Right lobe of liver (tissue), 6 donors: ENCODE measurements at regions of chr3 and their contacts with region 1.

Region 1: GRCh38 chr3:134308350-134308891 is 57.8 kb upstream of the RYK start:
- DNase-seq: peak; percentile 73 to 83 (median 74)
- ATAC-seq: peak; percentile 68 to 76 (median 68)
- H3K4me3 ChIP-seq: no peak overlapping the region
- H3K27ac ChIP-seq: peak overlapping the region in 2 of 3 donors; percentile 13 to 92
- H3K4me1 ChIP-seq: peaks cover 0 to 48% (median 22%) of the 10 kb centered on the region in 4 donors
- H3K27me3 ChIP-seq: no peaks in the 10 kb centered on the region
- CTCF ChIP-seq: peak; percentile 96 to 100 (median 97)
- POLR2A ChIP-seq: no peak

Region 2: GRCh38 chr3:134212906-134213665 is 95.3 kb before region 1 on chr3:
- intact Hi-C with region 1: loop called in 1 of 2 experiments (anchors 10 kb)
- DNase-seq: peak; percentile 73 to 84 (median 76)
- ATAC-seq: peak; percentile 91 to 95 (median 94)
- H3K4me3 ChIP-seq: no peak overlapping the region
- H3K27ac ChIP-seq: no peak overlapping the region
- H3K4me1 ChIP-seq: no peaks in the 10 kb centered on the region
- H3K27me3 ChIP-seq: no peaks in the 10 kb centered on the region
- CTCF ChIP-seq: peak; percentile 88 to 98 (median 96)
- POLR2A ChIP-seq: no peak

Region 3: DNA sequence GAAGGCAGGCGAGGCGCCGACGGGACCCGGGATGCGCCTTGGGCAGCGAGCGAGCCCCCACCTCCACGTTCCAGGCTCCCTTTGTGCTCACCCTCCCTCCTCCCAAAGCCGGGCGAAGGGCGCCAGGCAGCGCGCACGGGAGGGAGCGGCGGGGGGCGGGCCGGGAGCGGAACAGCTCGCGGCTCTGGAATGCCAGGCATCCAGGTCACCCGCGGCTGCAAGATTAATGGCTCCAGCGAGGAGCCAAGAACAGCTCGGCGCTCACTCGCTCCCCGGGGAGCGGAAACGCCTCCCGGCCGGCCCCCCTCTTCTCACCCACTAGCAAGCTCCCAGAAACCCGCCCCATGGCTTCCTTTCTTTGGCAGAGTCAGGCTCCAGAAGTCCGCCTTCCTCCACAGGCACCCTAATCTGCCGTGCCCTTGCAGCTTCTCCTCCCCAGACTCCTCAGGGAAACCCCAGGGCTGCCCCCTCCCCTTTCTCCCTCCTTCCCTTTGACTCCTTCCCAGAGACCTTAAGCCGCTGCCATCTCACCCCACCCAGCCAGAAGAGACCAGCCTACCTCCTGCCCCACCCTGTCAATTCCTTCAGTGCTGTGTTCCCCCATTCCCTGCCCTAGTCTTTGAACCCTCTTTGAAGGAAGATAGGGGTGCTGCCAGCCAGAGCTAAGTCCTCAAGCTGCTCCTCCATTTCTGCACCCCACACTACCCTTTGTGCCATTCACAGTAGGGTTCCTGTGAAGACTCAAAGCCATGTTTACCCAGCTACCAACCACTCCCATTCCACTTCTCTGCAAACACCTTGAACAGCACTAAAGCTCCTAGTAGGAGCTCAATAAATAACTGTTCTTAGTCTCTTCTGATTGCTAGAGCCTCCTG is 55.9 kb after region 1 on chr3:
- intact Hi-C with region 1: loop called in 1 of 2 experiments (anchors 5 kb)
- DNase-seq: peak; percentile 82 to 88 (median 84)
- ATAC-seq: peak; percentile 84 to 91 (median 87)
- H3K4me3 ChIP-seq: no peak overlapping the region
- H3K27ac ChIP-seq: peak overlapping the region; percentile 51 to 59 (median 53)
- H3K4me1 ChIP-seq: peaks cover 0 to 48% (median 20%) of the 10 kb centered on the region in 4 donors
- H3K27me3 ChIP-seq: no peaks in the 10 kb centered on the region
- CTCF ChIP-seq: no peak
- POLR2A ChIP-seq: no peak

Region 4: DNA sequence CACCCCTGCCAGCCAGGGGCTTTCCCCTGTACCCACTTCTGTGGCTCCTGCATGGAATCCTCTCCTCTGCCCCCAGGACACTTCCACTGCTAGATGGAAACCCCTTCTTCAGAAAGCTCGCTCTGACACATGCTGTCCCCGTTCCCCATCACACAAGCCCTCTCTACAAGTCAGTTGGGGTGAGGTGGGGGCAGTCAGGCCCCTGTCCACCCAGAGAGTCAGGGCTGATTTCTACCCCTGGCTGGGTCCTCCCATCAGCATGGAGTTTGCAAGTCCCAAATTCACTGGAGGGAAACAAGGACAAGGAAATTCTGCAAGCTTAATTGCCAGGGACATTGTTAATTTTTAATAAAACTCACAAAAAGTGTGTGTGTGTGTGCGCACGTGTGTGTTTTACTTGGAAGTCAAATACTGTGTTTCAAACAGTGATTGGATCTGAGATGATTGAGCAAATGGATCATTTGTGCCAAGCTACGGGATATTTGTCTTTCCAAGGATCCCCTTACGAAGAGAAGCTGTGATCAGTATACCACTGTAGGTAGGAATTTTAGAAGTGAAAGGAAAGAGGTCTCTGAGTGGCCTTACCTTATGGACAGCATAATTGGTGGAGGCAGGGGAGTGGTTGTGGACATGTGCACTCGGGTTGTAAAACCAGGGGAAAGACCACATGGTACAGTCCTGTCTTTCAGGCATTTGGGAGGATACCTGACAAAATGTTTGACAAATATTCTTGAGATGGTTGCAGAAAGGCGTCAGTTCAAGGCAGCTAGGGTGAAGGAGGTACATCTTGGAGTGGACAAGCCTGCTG is 67.4 kb after region 1 on chr3:
- intact Hi-C with region 1: loop called in 1 of 2 experiments (anchors 2 kb)
- DNase-seq: peak in 1 of 3 donors; percentile 59
- ATAC-seq: peak in 3 of 4 donors; percentile 3 to 23 (median 19)
- H3K4me3 ChIP-seq: peak overlapping the region; percentile 74 to 95 (median 87)
- H3K27ac ChIP-seq: peak overlapping the region; percentile 95 to 99 (median 97)
- H3K4me1 ChIP-seq: peaks cover 0 to 37% (median 11%) of the 10 kb centered on the region in 4 donors
- H3K27me3 ChIP-seq: no peaks in the 10 kb centered on the region
- CTCF ChIP-seq: no peak
- POLR2A ChIP-seq: no peak

Region 5: DNA sequence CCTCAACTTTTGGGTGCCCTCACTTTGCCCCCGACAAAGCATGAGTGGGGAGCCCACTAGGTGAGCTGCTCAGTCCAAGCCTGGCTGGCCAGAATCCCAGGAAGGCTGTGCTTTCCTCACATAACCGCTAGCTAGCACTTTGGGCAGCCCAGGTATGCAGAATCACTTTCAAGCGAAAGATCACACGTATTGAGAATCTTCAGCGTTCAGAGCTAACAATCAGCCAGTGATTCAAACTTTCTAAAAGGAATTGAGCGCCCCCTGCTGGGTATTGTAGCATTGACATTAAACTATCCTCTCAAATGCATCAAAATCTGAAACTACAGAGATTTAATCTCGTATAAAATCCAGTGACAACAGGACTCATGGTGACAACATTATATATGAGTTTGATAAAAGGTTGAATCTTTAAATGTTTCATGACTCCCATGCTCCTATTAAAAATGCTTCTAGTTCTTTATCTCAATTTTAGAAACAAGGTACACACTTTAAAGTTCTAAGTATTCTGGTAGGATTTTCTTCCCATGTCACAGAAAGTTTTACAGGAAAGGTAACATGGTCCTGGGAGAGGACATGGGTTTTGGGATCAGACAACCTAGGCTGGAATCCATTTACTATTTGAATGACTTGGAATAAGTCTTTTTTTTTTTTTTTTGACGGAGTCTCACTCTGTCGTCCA is 165.6 kb after region 1 on chr3:
- intact Hi-C with region 1: loop called in 1 of 2 experiments (anchors 10 kb)
- DNase-seq: peak in 2 of 3 donors; percentile 37 to 76
- ATAC-seq: peak; percentile 77 to 88 (median 82)
- H3K4me3 ChIP-seq: no peak overlapping the region
- H3K27ac ChIP-seq: no peak overlapping the region
- H3K4me1 ChIP-seq: peaks cover 0 to 31% (median 6%) of the 10 kb centered on the region in 4 donors
- H3K27me3 ChIP-seq: no peaks in the 10 kb centered on the region
- CTCF ChIP-seq: peak; percentile 83 to 85 (median 85)
- POLR2A ChIP-seq: no peak

Region 6: DNA sequence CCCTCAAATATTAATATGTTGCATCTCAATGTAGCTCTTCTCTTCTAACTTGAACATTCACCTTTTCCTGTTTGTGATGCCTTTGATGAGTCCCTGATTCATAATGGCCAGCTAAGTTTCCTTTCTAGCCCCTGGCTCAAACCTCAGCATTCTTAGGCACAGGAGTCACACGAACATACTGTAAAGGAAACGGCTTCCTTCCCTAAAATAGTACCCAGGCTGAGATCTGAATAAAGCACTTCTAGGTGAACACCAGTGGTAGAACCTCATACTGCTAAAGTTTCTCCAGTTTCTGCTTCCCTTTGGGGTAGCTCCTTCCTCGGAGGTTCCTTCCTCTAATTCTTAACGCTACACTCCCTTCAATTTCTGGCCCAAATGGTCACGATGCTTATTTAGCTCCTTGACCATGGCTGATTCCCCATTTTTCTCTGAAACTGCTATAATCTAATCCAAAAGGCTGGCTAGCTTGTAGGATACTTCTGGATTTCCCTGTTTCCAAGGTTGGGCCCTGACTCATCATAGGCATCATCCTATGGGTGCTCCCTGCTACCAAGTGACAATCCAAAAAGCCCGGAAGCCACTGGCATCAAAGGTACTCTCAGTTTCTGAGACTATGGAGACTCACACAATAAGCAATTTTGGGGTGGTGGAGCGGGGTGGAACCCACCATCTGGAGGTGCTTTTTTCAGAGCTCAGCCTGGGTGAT is 174.9 kb after region 1 on chr3:
- intact Hi-C with region 1: loop called (anchors 5 to 10 kb)
- DNase-seq: no peak
- ATAC-seq: no peak
- H3K4me3 ChIP-seq: no peak overlapping the region
- H3K27ac ChIP-seq: no peak overlapping the region
- H3K4me1 ChIP-seq: peaks cover 0 to 30% (median 9%) of the 10 kb centered on the region in 4 donors
- H3K27me3 ChIP-seq: no peaks in the 10 kb centered on the region
- CTCF ChIP-seq: no peak
- POLR2A ChIP-seq: no peak